ENCODE measurements at regions of chr2 and their contacts with region 1.

Region 1: DNA sequence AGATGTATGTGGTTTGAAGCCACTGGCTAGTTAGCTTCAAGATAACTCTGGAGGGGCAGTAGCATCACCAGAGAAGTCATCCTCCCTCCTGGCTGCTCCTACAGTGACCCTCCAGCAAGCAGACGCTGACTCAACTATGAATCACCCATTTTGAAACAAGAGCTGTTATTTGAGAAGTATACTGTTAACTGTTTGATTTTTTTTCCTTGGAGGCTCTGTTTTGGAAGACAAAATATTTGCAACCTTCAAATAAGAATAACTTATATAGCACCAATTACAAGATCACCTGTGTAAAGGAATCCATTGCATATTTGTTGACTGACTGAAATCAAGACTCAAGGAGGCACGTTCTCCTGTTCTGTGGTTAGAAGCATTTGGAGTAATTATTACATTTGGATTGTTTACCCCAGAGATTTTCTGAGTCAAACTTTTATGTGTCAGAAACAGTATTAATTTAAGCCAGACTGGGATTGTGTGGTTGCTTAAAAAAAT is 313.8 kb downstream of the MTX2 start:
- DNase-seq: peak; percentile 79 to 93
- H3K4me3 ChIP-seq: peak overlapping the region; percentile 25; the same call in 1 of the 2 replicates
- H3K27ac ChIP-seq: peak overlapping the region; percentile 86
- H3K4me1 ChIP-seq: peaks cover 30% of the 10 kb centered on the region
- H3K27me3 ChIP-seq: no peaks in the 10 kb centered on the region
- CTCF ChIP-seq: no peak

Region 2: DNA sequence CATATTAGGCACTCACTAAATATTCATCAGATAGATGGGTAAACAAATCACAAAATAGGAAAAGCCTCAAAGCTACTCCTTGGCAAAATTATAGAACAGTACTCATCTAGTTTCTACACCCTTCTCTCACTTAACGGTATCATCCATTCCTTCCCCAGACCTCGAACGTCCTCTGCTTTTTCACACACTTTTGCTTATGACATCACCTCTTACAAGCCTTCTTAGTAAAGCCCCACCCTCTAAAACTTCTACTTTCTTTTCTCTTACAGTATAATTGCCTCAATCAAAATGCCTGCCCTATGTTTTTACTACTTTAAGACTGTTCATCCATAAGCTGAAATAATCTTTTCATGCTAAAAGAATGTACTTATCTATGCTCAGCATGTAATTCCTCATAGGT is 1585.9 kb before region 1 on chr2:
- CTCF ChIA-PET with region 1: no interaction called
- POLR2A ChIA-PET with region 1: interaction called, 11 read pairs
- intact Hi-C with region 1: no loop called
- DNase-seq: no peak
- H3K4me3 ChIP-seq: no peak overlapping the region
- H3K27ac ChIP-seq: no peak overlapping the region
- H3K4me1 ChIP-seq: peaks cover 14% of the 10 kb centered on the region; the same call in 1 of the 2 replicates
- H3K27me3 ChIP-seq: no peaks in the 10 kb centered on the region
- CTCF ChIP-seq: no peak

Region 3: DNA sequence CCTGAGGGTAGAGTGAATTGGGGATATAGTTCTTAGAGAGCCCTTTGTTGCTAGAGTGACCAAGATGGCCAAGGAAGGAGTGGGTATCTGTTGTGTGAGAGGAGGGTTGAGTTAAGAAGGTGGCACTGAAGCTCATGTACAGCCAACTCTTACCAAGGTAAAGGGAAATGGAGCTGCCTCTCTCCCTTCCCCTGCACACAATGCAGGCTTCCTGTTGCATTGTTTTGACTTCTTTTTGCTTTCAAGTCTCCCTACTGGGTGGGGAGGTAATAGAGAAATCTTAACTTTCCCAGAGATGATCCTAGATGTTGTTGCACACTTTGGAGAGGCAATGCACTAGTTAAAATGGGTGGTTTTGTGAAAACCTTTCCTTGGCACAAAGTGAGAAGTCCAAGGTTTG is 370.8 kb before region 1 on chr2:
- CTCF ChIA-PET with region 1: no interaction called
- POLR2A ChIA-PET with region 1: no interaction called
- intact Hi-C with region 1: no loop called
- DNase-seq: no peak
- H3K4me3 ChIP-seq: no peak overlapping the region
- H3K27ac ChIP-seq: no peak overlapping the region
- H3K4me1 ChIP-seq: no peaks in the 10 kb centered on the region
- H3K27me3 ChIP-seq: peaks cover 15% of the 10 kb centered on the region
- CTCF ChIP-seq: no peak

Region 4: DNA sequence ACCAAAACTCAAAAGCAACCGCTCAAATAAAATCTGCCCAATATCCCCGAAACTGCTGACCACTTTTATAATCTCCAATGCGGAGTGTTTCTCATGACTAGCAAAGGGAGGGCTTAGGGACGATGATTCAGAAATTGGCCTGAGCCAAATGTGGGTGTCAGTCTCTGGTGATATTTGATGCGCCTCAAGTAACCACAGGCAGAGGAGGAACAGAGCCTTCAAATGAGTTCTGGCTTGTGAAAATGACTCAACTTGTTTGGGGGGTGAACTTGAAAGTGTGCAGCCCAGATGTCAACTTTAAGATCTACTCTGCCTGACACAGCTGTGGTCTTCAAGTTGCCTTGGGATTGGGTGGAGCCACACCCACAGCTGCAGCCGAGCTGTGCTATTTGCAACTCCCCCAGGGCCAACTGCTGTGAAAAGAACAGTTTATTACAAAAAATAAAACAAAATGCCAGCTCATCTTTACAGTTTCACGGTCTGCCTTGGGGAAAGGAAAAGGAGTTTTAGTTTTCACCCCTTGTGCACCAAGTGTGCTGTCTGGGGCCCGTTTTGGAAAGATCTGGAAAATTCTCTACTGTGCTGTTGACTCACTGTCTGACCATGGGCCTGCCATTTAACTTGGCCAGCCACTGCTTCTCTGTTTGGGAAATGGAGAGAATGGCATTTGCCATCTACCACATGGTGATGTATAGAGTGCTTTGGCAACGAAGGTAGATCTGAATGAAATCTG is 91.7 kb before region 1 on chr2:
- CTCF ChIA-PET with region 1: interaction called, 3 read pairs
- POLR2A ChIA-PET with region 1: no interaction called
- intact Hi-C with region 1: loop called (anchors 1 kb)
- DNase-seq: peak; percentile 60 to 78
- H3K4me3 ChIP-seq: no peak overlapping the region
- H3K27ac ChIP-seq: no peak overlapping the region
- H3K4me1 ChIP-seq: no peaks in the 10 kb centered on the region
- H3K27me3 ChIP-seq: peaks cover 8% of the 10 kb centered on the region; the same call in 1 of the 2 replicates
- CTCF ChIP-seq: no peak

Region 5: DNA sequence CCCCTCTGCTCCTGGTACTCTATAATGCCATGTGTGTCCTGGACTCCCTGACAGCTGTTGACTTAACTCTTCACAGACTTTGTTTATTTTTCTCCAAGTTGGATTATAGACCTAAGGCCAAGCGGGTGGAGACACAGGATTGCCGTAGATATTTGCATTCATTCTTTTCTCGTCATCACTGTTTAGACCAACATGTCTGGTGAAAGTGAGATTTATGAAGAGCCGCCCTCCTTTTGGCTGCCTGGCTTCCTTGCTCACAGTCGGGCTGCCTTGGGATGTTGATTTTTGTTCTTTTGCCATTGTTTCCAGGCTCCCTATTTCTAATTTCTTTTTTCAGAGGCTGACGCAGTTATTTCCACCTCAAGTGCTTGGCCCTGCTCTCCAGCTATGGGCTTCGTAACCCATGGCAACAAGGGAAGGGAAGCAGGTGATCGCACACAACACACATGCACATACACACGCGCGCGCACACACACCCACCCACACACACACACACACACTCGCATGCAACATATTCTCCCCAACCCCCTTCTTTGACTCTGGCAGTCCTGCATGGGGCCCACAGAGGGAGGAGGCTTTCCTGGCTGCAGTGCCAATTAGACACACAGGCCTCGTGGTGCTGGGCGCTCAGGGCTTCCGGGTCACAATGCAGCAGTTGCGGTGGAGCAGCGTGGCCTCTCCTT is 17.3 kb before region 1 on chr2:
- CTCF ChIA-PET with region 1: no interaction called
- POLR2A ChIA-PET with region 1: interaction called, 20 read pairs
- intact Hi-C with region 1: loop called (anchors 1 kb)
- DNase-seq: no peak
- H3K4me3 ChIP-seq: no peak overlapping the region
- H3K27ac ChIP-seq: no peak overlapping the region
- H3K4me1 ChIP-seq: peaks cover 23% of the 10 kb centered on the region
- H3K27me3 ChIP-seq: no peaks in the 10 kb centered on the region
- CTCF ChIP-seq: no peak

Region 6: DNA sequence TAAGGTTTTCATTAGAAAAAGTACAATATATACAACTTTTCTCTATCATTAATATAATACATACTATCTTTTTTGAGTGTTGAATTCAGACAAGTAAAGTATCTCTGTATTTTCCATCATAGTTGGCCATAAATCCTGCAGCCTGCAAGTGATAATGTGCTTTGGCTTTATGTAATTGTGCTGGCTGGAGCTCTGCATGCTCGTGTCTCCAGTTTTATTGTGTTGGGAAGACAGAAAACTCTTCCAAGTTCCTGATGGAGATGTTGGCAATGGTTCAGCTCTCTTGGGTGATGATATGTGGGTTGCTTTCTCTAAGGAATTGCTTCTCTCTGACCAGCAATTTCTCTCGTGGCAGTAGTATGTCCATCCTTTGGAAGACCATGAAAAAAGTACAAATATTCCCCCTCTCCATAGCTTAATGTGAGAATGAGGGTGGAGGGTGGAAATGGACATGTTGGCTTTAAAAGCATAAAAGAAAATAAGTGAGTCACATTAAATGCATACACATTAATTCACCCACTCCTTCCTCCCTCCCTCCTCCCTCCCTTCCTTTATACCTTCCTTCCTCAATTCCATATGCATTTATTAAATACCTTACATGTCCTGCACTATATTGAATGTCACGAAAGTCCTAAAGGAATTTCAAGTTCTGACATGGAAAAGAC is 30.4 kb after region 1 on chr2:
- CTCF ChIA-PET with region 1: interaction called, 3 read pairs
- POLR2A ChIA-PET with region 1: interaction called, 7 read pairs
- intact Hi-C with region 1: loop called (anchors 1 kb)
- DNase-seq: no peak
- H3K4me3 ChIP-seq: no peak overlapping the region
- H3K27ac ChIP-seq: no peak overlapping the region
- H3K4me1 ChIP-seq: peaks cover 14% of the 10 kb centered on the region
- H3K27me3 ChIP-seq: no peaks in the 10 kb centered on the region
- CTCF ChIP-seq: no peak